ENCODE measurements at regions of chr2 and their contacts with region 1.

Region 1: DNA sequence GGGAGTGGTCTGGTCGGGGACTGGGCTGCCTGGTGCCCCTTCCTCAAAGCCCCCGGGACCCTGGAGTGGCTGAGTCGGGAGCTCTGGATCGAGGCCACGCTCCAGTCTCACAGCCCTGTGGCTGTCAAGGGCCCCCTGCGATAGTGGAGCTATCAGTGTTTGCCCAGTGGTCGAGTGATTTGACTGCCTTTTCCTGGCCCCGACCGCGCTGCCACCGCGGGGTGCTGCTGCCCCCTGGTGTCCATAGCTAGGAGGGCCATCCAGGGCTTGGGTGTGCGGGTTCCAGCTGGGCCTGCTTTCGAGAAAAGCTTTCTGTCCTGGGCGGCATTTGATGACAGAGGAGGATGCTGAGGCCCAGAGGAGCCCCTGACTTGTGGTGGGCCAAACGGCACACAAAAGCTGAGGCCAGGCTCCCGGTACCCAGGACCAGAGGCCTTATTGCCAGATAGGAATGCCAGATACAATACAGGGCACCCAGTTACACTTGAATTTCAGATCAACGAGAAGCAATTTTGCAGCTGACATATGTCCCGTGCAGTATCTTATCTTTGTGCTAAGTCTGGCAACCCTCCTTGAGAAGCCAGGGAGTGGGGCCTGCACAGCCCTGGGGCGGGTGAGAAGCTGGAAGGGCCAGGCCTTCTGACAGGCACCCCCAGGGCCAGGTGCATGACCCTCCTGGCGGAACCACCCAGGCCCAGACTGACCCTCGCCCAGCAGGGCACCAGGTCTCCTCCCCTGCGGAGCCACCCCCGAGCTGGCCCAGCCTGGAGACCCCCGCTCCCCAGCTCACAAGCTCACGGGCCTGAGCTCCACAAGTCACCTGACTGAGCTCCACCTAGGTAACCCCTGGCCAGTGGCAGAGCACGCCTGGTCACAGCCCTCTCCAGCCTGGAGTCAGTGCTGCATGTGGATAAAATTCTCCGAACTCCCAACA is 13.0 kb downstream of the ODC1 start:
- DNase-seq: peak; percentile 64 to 88
- H3K4me3 ChIP-seq: no peak overlapping the region
- H3K4me1 ChIP-seq: no peaks in the 10 kb centered on the region
- H3K27me3 ChIP-seq: no peaks in the 10 kb centered on the region

Region 2: DNA sequence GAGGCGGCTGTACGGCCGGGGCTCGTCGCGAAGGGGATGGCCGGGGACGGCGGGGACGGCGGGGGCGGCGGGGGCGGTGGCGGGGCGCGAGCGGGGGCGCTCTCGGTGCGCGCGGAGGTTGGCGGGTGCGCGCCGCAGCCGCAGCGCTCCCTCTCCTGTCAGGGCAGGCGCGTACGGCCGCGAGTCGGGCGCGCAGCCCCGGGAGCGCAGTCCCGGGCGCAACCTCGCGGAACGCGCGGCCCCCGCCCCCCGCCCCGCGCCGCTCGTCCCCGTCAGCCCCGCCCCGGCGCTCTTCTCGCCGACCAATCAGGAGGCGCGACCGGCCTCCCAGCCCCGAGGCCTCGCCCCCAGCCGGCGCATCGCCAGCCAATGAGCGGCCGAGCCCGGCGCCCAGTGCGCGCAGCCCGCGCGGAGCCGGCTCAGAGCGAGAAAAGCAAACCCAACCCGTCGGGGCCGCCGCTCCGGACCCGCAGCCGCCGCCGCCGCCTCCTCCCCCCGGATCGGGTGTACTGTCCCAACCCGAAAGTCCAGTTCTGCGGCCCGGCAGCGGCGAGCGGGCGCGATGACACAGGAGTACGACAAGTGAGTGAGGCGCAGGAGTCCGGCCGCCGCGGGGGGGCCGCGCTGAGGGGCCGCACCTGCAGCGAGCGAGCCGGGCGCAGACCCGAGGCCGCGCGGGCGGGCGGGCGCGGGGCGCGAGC is 483.7 kb before region 1 on chr2 and contains the start of gene GRHL1:
- in situ Hi-C with region 1: no loop called
- DNase-seq: peak; percentile 89 to 94
- H3K4me3 ChIP-seq: peak within 1 kb of the TSS; percentile 63
- H3K4me1 ChIP-seq: peaks cover 23% of the 10 kb centered on the region
- H3K27me3 ChIP-seq: no peaks in the 10 kb centered on the region

Region 3: DNA sequence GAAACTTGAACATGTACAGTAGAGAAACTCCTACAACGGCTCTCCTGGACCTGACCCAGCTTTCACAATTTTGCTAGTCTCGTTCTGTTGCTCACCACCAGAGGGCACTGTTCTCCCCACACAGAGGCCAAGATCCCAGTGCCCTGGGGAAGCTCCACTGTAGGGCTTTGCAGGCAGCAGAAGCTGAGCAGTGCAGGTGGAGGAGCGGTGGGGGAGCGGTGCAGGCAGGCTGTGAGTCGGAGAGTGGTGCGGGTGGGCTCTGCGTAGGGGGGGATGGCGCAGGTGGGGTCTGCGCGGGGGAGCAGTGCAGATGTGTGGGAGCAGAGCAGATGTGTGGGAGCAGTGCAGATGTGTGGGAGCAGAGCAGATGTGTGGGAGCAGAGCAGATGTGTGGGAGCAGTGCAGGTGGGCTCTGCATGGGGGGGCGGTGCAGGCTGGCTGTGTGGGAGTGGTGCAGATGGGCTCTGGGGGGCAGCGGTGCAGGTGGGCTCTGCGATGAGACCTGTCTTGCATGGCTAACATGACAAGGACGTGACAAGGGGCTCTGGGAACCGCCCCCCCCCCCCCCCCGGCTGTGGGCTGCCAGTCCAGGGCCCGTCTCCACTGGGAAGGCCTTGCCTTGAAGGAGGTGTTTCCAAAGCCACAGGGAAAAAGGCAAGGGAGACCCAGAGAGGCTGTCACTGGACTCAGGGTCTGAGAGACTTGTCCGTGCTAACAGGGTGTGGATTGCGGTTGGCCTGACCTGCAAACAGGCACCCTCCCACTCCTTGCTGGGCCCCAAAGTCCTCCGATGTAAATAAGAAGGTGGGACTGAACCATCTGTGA is 362.3 kb before region 1 on chr2:
- in situ Hi-C with region 1: loop called (anchors 10 kb)
- DNase-seq: peak; percentile 87 to 91
- H3K4me3 ChIP-seq: no peak overlapping the region
- H3K4me1 ChIP-seq: no peaks in the 10 kb centered on the region
- H3K27me3 ChIP-seq: no peaks in the 10 kb centered on the region; the same call in 1 of the 2 replicates

Region 4: DNA sequence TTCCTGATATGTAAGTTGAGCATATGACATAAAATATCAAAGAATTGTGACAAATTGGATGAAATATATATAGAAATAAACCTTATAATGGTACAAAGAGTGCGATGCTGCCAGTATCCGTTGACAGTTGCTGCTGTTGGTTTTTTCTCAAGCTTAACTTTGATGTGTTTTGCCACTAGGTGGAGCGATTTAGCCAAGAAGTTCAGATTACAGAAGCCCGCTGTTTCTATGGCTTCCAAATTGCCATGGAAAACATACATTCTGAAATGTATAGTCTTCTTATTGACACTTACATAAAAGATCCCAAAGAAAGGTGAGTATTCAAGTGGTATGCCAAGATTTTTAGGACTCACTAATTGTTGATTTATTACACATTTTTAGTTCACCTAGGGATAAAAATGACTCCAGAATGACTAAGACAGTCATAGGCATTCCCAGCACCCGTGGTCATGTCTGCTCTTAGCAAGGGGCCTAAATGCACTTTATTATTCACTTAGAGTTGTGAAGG is 310.6 kb before region 1 on chr2:
- in situ Hi-C with region 1: loop called (anchors 5 kb)
- DNase-seq: peak; percentile 71 to 78
- H3K4me3 ChIP-seq: peak overlapping the region; percentile 98
- H3K4me1 ChIP-seq: peaks cover 30% of the 10 kb centered on the region
- H3K27me3 ChIP-seq: no peaks in the 10 kb centered on the region

Region 5: DNA sequence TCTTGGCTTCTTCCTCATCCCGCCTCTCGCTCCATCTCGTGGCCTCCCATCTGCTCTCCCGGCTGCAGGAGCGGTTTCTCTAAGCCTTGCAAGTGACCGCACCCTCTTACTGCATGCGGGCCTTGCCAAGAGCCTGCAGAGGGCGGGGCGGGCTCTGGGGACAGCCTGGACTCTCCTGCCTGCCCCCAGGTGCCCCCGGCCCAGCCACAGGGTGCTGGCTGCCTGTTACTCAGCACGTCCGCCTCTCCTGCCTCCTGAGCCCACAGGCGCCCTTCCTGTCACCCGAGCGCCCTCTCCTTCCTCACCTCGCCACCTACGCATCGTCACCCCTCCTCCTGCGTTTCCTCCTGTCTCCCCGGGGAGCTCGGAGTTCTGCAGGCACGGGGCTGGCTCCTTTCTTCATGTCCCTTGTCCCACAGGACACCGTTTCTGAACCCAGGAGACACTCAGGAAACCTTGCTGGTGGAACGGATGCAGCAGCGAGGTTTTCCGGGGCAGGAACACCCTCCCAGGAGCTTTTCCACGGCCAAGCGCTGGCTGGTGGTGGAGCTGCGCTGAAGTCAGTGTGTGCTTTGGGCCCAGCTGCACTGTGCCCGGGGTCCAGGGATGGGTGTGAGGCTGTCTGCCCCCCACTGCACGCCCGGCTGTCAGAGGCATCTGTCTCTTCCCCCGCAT is 104.0 kb before region 1 on chr2:
- in situ Hi-C with region 1: no loop called
- DNase-seq: no peak
- H3K4me3 ChIP-seq: no peak overlapping the region
- H3K4me1 ChIP-seq: no peaks in the 10 kb centered on the region
- H3K27me3 ChIP-seq: no peaks in the 10 kb centered on the region

Measured in HAP-1 (cell line).